ENCODE measurements at regions of chr6 and their contacts with region 1.

Region 1: DNA sequence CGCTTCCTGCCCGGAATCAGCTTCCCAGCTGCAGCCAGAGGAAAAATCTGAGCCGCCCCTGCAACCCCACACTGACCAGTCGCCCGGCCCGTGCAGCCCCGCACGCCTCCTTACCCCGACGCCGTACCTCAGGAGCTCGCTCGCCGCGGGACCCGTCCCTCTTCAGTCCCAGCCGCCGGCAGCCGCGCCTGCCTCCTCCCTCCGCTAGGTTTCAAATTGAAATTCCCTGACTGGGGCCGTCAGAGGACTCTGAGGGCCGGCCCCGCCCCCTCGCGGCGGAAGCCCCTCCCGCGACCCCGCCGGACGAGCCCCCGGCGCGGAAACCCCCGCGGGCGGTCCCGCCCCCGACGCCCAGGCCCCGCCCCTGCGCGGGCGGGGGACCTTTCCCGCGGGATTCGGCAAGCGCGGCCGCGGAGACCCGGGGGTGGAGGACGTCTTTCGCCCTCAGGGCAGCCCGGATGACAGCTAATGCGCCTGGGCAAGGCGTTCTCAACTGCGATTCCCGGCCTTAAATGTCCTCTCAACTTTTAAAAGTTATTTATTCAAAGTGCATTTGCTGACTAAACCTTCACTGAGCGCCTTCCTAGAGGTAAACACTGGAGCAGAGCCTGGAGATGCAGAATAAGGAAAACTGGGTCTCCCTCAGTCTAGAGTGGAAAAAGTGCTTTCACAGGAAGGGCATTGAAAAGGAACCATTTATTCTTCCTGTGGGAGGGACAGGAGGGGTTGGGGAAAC is at the start of gene EPB41L2:
- DNase-seq: peak; percentile 63 to 87 (median 73)
- ATAC-seq: peak; percentile 94
- H3K4me3 ChIP-seq: peak within 1 kb of the TSS; percentile 63
- H3K4me3 Mint-ChIP-seq: peak within 1 kb of the TSS; percentile 83 to 93 (median 90)
- H3K27ac ChIP-seq: peak within 1 kb of the TSS; percentile 67
- H3K27ac Mint-ChIP-seq: peak within 1 kb of the TSS; percentile 20 to 92 (median 77)
- H3K4me1 ChIP-seq: peaks cover 0 to 6% of the 10 kb centered on the region in 2 donors
- H3K4me1 Mint-ChIP-seq: peaks cover 8 to 27% (median 25%) of the 10 kb centered on the region in 7 donors
- H3K27me3 ChIP-seq: no peaks in the 10 kb centered on the region
- H3K27me3 Mint-ChIP-seq: peaks cover 0 to 35% (median 0%) of the 10 kb centered on the region in 5 donors
- total RNA-seq, gene EPB41L2: 10.3 to 26.9 (median 20.9) TPM

Region 2: GRCh38 chr6:131135244-131136020 is 72.2 kb after region 1 on chr6 and contains the start of gene AKAP7:
- CTCF ChIA-PET with region 1: no interaction called
- POLR2A ChIA-PET with region 1: no interaction called
- intact Hi-C with region 1: loop called (anchors 2 to 5 kb)
- DNase-seq: peak; percentile 42 to 67 (median 61)
- ATAC-seq: peak; percentile 81
- H3K4me3 ChIP-seq: peak within 1 kb of the TSS; percentile 73
- H3K4me3 Mint-ChIP-seq: peak within 1 kb of the TSS; percentile 87 to 99 (median 94)
- H3K27ac ChIP-seq: peak within 1 kb of the TSS; percentile 75
- H3K27ac Mint-ChIP-seq: peak within 1 kb of the TSS; percentile 93 to 99 (median 96)
- H3K4me1 ChIP-seq: peaks cover 0 to 9% of the 10 kb centered on the region in 2 donors
- H3K4me1 Mint-ChIP-seq: peaks cover 18 to 50% (median 33%) of the 10 kb centered on the region in 7 donors
- H3K27me3 ChIP-seq: no peaks in the 10 kb centered on the region
- H3K27me3 Mint-ChIP-seq: peaks cover 0 to 21% (median 0%) of the 10 kb centered on the region in 5 donors
- total RNA-seq, gene AKAP7: 6.5 to 20.2 (median 12.4) TPM

Region 3: GRCh38 chr6:132456700-132457143 is 1393.5 kb after region 1 on chr6:
- CTCF ChIA-PET with region 1: no interaction called
- POLR2A ChIA-PET with region 1: no interaction called
- intact Hi-C with region 1: no loop called
- DNase-seq: no peak
- ATAC-seq: no peak
- H3K4me3 ChIP-seq: no peak overlapping the region
- H3K4me3 Mint-ChIP-seq: no peak overlapping the region
- H3K27ac ChIP-seq: no peak overlapping the region
- H3K27ac Mint-ChIP-seq: no peak overlapping the region
- H3K4me1 ChIP-seq: no peaks in the 10 kb centered on the region
- H3K4me1 Mint-ChIP-seq: peaks cover 0 to 2% (median 0%) of the 10 kb centered on the region in 7 donors
- H3K27me3 ChIP-seq: no peaks in the 10 kb centered on the region
- H3K27me3 Mint-ChIP-seq: no peaks in the 10 kb centered on the region